ENCODE measurements at regions of chr1 and their contacts with region 1.

Region 1: DNA sequence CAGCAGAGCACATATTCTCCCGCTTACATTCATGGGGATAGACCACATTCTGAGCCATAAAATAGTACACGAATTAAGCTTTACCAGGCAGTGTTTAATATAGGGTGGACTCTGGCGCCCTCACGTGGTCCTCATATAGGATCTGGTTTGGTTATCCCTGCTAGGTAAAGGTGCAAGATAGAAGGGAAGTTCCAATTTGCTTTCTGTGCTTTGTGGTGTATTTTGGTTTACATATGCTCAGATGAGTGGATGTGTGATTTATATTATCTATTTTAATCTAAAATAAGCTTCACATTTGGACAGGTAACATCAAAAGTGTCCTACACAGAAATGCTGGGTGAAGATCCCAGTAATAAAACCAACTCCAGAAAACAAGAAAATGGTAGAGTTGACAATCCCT is 3.6 kb downstream of the CR1 start:
- DNase-seq: peak; percentile 72
- H3K4me3 ChIP-seq: no peak overlapping the region
- H3K27ac ChIP-seq: no peak overlapping the region
- H3K4me1 ChIP-seq: peaks cover 4% of the 10 kb centered on the region
- H3K27me3 ChIP-seq: peaks cover 47% of the 10 kb centered on the region in 2 experiments
- CTCF ChIP-seq: peak; percentile 61 to 69
- POLR2A ChIP-seq: no peak

Region 2: GRCh38 chr1:206635080-206635977 is 864.2 kb before region 1 on chr1 and contains the start of gene DYRK3:
- CTCF ChIA-PET with region 1: interaction called, 10 read pairs
- POLR2A ChIA-PET with region 1: no interaction called
- dilution Hi-C with region 1: no loop called
- intact Hi-C with region 1: no loop called
- DNase-seq: peak; percentile 93
- H3K4me3 ChIP-seq: peak within 1 kb of the TSS; percentile 72 to 90 (median 80)
- H3K27ac ChIP-seq: peak within 1 kb of the TSS; percentile 59
- H3K4me1 ChIP-seq: peaks cover 13% of the 10 kb centered on the region
- H3K27me3 ChIP-seq: no peaks in the 10 kb centered on the region
- CTCF ChIP-seq: peak in 1 of 2 donors; percentile 28
- POLR2A ChIP-seq: peak; percentile 88
- total RNA-seq, gene DYRK3: 7.4 and 10.9 TPM in 2 replicates

Region 3: DNA sequence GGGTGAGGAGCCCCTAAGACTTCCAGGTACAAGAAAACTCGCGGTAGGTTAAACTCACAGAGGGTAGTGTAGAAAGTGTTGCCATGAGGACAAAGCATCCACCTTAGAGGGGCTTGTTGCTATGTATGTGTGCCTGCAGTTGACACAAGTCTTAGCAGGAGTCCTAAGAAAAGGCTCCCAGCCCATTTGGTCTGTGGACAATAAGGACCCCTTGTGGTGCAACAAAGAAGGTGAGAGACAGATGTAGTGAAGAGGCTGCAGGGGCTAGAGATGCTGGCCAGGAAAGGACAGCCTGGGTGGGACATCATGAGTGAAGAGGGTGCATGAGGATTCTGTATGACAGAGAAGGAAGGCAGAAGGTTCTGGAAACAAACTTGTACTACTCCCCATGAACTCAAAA is 691.0 kb before region 1 on chr1:
- CTCF ChIA-PET with region 1: interaction called, 9 read pairs
- POLR2A ChIA-PET with region 1: no interaction called
- dilution Hi-C with region 1: no loop called
- intact Hi-C with region 1: loop called (anchors 1 kb)
- DNase-seq: no peak
- H3K4me3 ChIP-seq: no peak overlapping the region
- H3K27ac ChIP-seq: no peak overlapping the region
- H3K4me1 ChIP-seq: no peaks in the 10 kb centered on the region
- H3K27me3 ChIP-seq: peaks cover 3 to 13% of the 10 kb centered on the region in 2 experiments
- CTCF ChIP-seq: peak in 1 of 2 donors; percentile 21
- POLR2A ChIP-seq: no peak

Region 4: DNA sequence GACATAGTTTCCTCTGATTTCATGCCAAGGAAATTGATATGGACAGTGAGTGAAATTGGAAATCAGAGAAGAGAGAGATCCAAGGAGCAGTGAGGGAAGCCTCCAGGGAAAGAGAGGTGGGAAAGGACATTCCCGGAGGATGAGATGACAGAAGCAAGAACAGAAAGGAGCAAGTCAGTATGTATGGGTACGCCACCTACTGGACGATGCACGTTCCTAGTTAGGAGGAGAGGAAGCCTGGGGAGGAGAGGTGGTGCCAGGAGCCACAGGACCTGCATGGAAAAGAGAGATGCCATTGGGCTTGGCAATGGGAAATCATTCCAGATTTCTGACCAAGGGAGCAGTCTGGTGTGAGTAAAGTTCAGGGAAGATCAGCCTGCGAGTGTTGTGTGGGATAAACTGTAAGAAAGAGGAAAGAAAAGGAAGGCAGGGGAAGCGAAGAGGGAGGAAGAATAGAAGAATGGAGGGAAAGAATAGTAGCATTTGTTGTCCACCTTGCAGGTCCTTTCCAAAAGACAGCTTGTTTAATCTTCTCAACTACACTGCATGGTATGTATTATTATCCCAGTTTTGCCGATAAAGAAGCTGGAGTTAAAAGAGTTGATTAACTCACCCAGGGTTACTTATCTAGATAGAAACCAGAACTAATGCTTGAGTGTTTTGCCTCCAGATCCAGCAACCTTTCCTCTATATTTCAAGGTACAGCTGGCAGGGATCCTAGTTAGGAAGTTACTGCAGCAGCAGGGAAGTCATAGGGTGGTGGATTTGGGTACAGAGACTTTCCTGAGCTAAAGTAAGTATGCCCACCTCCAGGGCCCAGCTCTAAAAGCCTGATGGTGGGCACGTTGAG is 494.4 kb before region 1 on chr1:
- CTCF ChIA-PET with region 1: no interaction called
- POLR2A ChIA-PET with region 1: no interaction called
- dilution Hi-C with region 1: no loop called
- intact Hi-C with region 1: loop called (anchors 2 kb)
- DNase-seq: peak; percentile 33
- H3K4me3 ChIP-seq: no peak overlapping the region
- H3K27ac ChIP-seq: no peak overlapping the region
- H3K4me1 ChIP-seq: no peaks in the 10 kb centered on the region
- H3K27me3 ChIP-seq: peaks cover 0 to 3% of the 10 kb centered on the region in 2 experiments
- CTCF ChIP-seq: peak; percentile 83 to 86
- POLR2A ChIP-seq: no peak

Region 5: GRCh38 chr1:207077470-207078377 is 421.8 kb before region 1 on chr1:
- CTCF ChIA-PET with region 1: interaction called, 35 read pairs
- POLR2A ChIA-PET with region 1: no interaction called
- dilution Hi-C with region 1: no loop called
- intact Hi-C with region 1: loop called (anchors 1 kb)
- DNase-seq: peak; percentile 85
- H3K4me3 ChIP-seq: no peak overlapping the region
- H3K27ac ChIP-seq: no peak overlapping the region
- H3K4me1 ChIP-seq: no peaks in the 10 kb centered on the region
- H3K27me3 ChIP-seq: peaks cover 2 to 5% of the 10 kb centered on the region in 2 experiments
- CTCF ChIP-seq: peak; percentile 69 to 75
- POLR2A ChIP-seq: no peak

Region 6: GRCh38 chr1:207181838-207182237 is 317.7 kb before region 1 on chr1:
- CTCF ChIA-PET with region 1: no interaction called
- POLR2A ChIA-PET with region 1: no interaction called
- dilution Hi-C with region 1: no loop called
- intact Hi-C with region 1: loop called (anchors 1 kb)
- DNase-seq: peak; percentile 23
- H3K4me3 ChIP-seq: no peak overlapping the region
- H3K27ac ChIP-seq: no peak overlapping the region
- H3K4me1 ChIP-seq: no peaks in the 10 kb centered on the region
- H3K27me3 ChIP-seq: peaks cover 0 to 4% of the 10 kb centered on the region in 2 experiments
- CTCF ChIP-seq: peak in 1 of 2 donors; percentile 1
- POLR2A ChIP-seq: no peak

Region 7: GRCh38 chr1:207404849-207405525 is 94.6 kb before region 1 on chr1:
- CTCF ChIA-PET with region 1: interaction called, 6 read pairs
- POLR2A ChIA-PET with region 1: no interaction called
- dilution Hi-C with region 1: no loop called
- intact Hi-C with region 1: loop called (anchors 2 kb)
- DNase-seq: peak; percentile 70
- H3K4me3 ChIP-seq: no peak overlapping the region
- H3K27ac ChIP-seq: no peak overlapping the region
- H3K4me1 ChIP-seq: peaks cover 5% of the 10 kb centered on the region
- H3K27me3 ChIP-seq: peaks cover 6 to 9% of the 10 kb centered on the region in 2 experiments
- CTCF ChIP-seq: peak; percentile 49 to 55
- POLR2A ChIP-seq: no peak

Measured in endothelial cell of umbilical vein (primary cell).